CD8-positive, alpha-beta T cell (primary cell): ENCODE measurements at regions of chr1 and their contacts with region 1.

Region 1: GRCh38 chr1:88983791-88984559 is 8.5 kb downstream of the KYAT3 start:
- DNase-seq: peak in 4 of 9 experiments; percentile 23 to 83 (median 61)
- ATAC-seq: peak; percentile 85
- H3K4me3 ChIP-seq: no peak overlapping the region
- H3K4me3 Mint-ChIP-seq: peak overlapping the region; percentile 47
- H3K27ac ChIP-seq: peak overlapping the region in 1 of 2 experiments; percentile 38
- H3K27ac Mint-ChIP-seq: peak overlapping the region; percentile 52
- H3K4me1 ChIP-seq: peaks cover 15% of the 10 kb centered on the region
- H3K4me1 Mint-ChIP-seq: peaks cover 62% of the 10 kb centered on the region
- H3K27me3 ChIP-seq: no peaks in the 10 kb centered on the region
- H3K27me3 Mint-ChIP-seq: no peaks in the 10 kb centered on the region
- CTCF ChIP-seq: peak; percentile 69

Region 2: DNA sequence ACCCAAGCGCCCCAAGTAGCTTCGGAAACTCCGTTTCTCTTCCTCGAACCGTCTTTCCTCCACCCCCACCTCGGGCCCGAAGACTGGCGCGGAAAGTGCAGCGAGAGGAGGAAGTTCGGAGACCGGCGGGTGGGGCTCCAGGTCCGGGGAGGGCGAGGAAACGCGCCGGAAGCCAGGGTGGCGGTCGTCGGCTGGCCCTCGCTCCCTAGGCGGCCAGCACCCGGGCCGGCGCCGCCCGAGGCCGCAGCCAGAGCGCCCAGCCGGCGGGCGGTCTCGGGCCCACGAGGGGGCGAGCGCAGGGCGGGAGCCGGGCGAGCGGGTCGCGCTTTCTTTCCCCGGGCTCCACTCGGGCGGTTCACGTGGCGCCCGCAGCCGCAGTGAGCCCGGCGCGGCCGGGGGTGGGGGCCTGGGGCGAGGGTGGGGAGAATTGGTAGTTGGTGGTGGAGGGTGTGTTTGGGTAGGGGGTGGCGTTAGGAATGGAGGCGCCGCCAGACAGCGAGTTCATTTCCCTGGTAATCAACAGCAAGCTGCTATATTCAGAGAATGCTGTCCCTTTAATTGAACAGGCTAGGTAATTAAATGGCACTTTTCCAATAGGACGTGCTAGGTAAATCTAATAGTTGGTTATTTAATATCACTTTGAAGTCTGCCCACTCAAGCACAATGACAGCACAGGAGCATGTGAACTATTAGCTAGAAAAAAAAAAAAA is 1648.6 kb before region 1 on chr1:
- CTCF ChIA-PET with region 1: no interaction called
- POLR2A ChIA-PET with region 1: no interaction called
- intact Hi-C with region 1: loop called in 1 of 2 experiments (anchors 5 kb)
- DNase-seq: peak in 8 of 9 experiments; percentile 48 to 77 (median 64)
- ATAC-seq: peak; percentile 53
- H3K4me3 ChIP-seq: peak overlapping the region; percentile 53 to 60
- H3K4me3 Mint-ChIP-seq: peak overlapping the region; percentile 89
- H3K27ac ChIP-seq: peak overlapping the region; percentile 14 to 62
- H3K27ac Mint-ChIP-seq: peak overlapping the region; percentile 90
- H3K4me1 ChIP-seq: peaks cover 35% of the 10 kb centered on the region
- H3K4me1 Mint-ChIP-seq: peaks cover 56% of the 10 kb centered on the region
- H3K27me3 ChIP-seq: no peaks in the 10 kb centered on the region
- H3K27me3 Mint-ChIP-seq: no peaks in the 10 kb centered on the region
- CTCF ChIP-seq: no peak

Region 3: GRCh38 chr1:89085781-89086180 is 101.8 kb after region 1 on chr1:
- CTCF ChIA-PET with region 1: interaction called, 12 read pairs
- POLR2A ChIA-PET with region 1: no interaction called
- intact Hi-C with region 1: no loop called
- DNase-seq: peak in 4 of 9 experiments; percentile 33 to 73 (median 51)
- ATAC-seq: peak; percentile 57
- H3K4me3 ChIP-seq: no peak overlapping the region
- H3K4me3 Mint-ChIP-seq: no peak overlapping the region
- H3K27ac ChIP-seq: no peak overlapping the region
- H3K27ac Mint-ChIP-seq: no peak overlapping the region
- H3K4me1 ChIP-seq: no peaks in the 10 kb centered on the region
- H3K4me1 Mint-ChIP-seq: no peaks in the 10 kb centered on the region
- H3K27me3 ChIP-seq: no peaks in the 10 kb centered on the region
- H3K27me3 Mint-ChIP-seq: no peaks in the 10 kb centered on the region
- CTCF ChIP-seq: peak; percentile 59

Region 4: DNA sequence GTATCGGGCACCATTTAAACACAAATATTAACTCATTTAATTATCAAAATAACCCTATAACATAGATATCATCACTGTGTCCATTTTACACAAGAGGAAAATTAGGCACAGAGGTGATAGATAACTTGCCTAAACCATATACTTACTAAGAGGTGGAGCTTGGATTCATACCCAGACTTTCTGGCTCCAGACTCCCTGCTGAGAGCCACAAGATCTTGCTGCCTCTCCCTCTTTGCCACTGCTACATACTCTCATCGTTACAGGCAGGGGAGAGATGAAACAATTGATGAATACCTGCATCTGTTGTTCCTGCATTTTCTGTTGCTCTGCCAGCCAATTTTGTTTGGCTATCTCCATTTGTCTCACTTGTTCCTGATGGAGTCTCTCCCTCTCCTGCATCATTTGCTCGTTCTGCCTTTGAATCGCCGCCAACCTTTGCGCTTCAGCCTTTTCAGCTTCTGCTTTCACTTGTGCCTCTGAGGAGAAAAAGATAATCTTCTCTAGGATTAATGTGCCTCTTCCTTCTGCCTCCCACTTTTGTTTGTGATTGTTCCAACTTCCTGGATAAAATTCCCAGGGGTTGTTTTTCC is 278.0 kb after region 1 on chr1:
- CTCF ChIA-PET with region 1: interaction called, 3 read pairs
- POLR2A ChIA-PET with region 1: no interaction called
- intact Hi-C with region 1: loop called in 1 of 2 experiments (anchors 5 kb)
- DNase-seq: no peak
- ATAC-seq: no peak
- H3K4me3 ChIP-seq: no peak overlapping the region
- H3K4me3 Mint-ChIP-seq: peak overlapping the region; percentile 32
- H3K27ac ChIP-seq: peak overlapping the region in 1 of 2 experiments; percentile 55
- H3K27ac Mint-ChIP-seq: peak overlapping the region; percentile 78
- H3K4me1 ChIP-seq: peaks cover 58% of the 10 kb centered on the region
- H3K4me1 Mint-ChIP-seq: peaks cover 82% of the 10 kb centered on the region
- H3K27me3 ChIP-seq: no peaks in the 10 kb centered on the region
- H3K27me3 Mint-ChIP-seq: no peaks in the 10 kb centered on the region
- CTCF ChIP-seq: no peak

Region 5: GRCh38 chr1:89994805-89995597 is 1011.0 kb after region 1 on chr1 and contains the start of gene ZNF326:
- CTCF ChIA-PET with region 1: no interaction called
- POLR2A ChIA-PET with region 1: no interaction called
- intact Hi-C with region 1: loop called in 1 of 2 experiments (anchors 5 kb)
- DNase-seq: peak; percentile 89 to 96 (median 93)
- ATAC-seq: peak; percentile 97
- H3K4me3 ChIP-seq: peak within 1 kb of the TSS; percentile 72 to 93
- H3K4me3 Mint-ChIP-seq: peak within 1 kb of the TSS; percentile 99
- H3K27ac ChIP-seq: peak within 1 kb of the TSS; percentile 78 to 82
- H3K27ac Mint-ChIP-seq: peak within 1 kb of the TSS; percentile 96
- H3K4me1 ChIP-seq: peaks cover 25% of the 10 kb centered on the region
- H3K4me1 Mint-ChIP-seq: peaks cover 35% of the 10 kb centered on the region
- H3K27me3 ChIP-seq: no peaks in the 10 kb centered on the region
- H3K27me3 Mint-ChIP-seq: no peaks in the 10 kb centered on the region
- CTCF ChIP-seq: no peak
- total RNA-seq, gene ZNF326: 55.5 to 59.1 TPM